Left colon (tissue), 2 donors: ENCODE measurements at regions of chr13 and their contacts with region 1.

Region 1: DNA sequence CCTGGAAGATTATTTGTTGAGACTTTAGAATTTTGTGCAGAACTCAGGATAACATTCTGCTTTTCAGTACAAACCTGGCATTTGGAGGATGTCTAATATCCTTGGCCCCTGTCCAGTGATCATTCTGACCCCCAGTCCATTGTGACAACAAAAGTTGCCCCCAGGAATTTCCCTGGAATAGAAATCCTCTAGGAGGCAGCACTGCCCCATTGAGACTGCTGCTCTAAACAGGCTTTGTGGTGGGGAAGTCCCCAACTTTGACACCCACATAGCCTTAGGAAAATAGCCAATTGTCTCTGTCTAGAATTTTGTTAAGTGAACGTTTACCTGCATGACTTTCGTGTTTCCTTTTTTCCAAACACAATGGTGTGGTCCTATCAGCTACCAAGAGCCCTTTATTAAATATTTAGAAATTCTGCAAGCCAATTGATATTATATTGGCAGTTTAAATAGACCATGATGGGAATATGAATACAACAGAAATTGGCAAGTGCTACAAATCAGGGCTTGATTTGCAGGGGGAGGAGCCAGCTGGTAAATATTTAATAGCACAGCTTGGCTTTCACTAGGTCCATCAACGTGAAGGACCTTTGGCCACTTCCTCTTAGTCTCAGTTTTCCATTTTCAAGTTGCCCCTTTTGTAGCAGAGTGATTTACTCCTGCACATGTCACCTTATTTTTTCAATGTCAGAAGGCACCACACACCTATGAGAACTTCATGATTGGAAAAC is 451.7 kb downstream of the EFNB2 start:
- DNase-seq: peak; percentile 54 to 55
- ATAC-seq: peak; percentile 81

Region 2: GRCh38 chr13:106464076-106464475 is 380.3 kb after region 1 on chr13:
- intact Hi-C with region 1: no loop called
- DNase-seq: no peak
- ATAC-seq: no peak

Region 3: GRCh38 chr13:106520205-106521054 is 436.6 kb after region 1 on chr13:
- intact Hi-C with region 1: loop called in 1 of 2 experiments (anchors 10 kb)
- DNase-seq: no peak
- ATAC-seq: peak; percentile 16